ENCODE measurements at regions of chr11 and their contacts with region 1.

Region 1: DNA sequence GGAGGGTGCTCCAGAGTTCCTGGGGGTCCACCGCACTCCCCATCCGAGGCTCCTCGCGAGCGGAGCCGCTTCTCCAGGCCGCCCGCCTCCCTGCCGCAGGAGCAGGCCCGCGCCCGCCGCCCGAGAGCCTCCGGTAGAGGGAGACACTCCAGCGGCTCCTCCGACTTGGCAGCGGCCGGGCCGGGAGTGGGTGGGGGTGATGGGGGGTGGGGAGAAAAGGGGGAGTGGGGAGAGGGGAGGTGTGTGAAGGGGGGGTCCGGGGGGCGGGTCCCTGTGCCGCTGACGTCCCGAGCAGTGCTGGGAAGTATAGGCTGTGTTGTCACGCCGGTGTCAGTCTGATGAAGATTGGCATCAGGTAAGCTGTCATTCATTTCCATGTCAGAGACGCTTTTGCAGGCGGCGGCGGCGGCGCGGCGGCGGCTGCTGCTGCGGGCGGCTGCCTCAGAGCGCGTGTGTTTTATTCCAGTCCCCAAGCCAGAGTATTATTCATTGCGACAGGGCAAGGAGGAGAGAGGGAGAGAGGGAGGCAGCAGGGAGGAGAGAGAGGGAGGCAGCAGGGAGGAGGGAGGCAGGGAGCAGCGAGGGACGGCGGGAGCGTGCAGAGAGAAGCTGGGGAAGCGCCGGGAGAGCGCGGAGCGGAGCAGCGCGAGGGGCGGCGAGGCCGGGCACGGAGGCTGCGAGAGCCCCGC is at the start of gene PKNOX2:
- DNase-seq: peak; percentile 70 to 84
- H3K4me3 ChIP-seq: peak within 1 kb of the TSS; percentile 59 to 65
- H3K27ac ChIP-seq: peak within 1 kb of the TSS; percentile 72 to 88
- H3K4me1 ChIP-seq: peaks cover 0 to 43% (median 30%) of the 10 kb centered on the region in 4 donors
- H3K27me3 ChIP-seq: no peaks in the 10 kb centered on the region
- CTCF ChIP-seq: peak in 1 of 2 experiments; percentile 68

Region 2: GRCh38 chr11:125224391-125225010 is 59.9 kb after region 1 on chr11:
- intact Hi-C with region 1: loop called (anchors 5 kb)
- DNase-seq: peak in 1 of 2 donors; percentile 43
- H3K4me3 ChIP-seq: no peak overlapping the region
- H3K27ac ChIP-seq: no peak overlapping the region
- H3K4me1 ChIP-seq: no peaks in the 10 kb centered on the region
- H3K27me3 ChIP-seq: no peaks in the 10 kb centered on the region
- CTCF ChIP-seq: peak; percentile 30 to 31

Region 3: DNA sequence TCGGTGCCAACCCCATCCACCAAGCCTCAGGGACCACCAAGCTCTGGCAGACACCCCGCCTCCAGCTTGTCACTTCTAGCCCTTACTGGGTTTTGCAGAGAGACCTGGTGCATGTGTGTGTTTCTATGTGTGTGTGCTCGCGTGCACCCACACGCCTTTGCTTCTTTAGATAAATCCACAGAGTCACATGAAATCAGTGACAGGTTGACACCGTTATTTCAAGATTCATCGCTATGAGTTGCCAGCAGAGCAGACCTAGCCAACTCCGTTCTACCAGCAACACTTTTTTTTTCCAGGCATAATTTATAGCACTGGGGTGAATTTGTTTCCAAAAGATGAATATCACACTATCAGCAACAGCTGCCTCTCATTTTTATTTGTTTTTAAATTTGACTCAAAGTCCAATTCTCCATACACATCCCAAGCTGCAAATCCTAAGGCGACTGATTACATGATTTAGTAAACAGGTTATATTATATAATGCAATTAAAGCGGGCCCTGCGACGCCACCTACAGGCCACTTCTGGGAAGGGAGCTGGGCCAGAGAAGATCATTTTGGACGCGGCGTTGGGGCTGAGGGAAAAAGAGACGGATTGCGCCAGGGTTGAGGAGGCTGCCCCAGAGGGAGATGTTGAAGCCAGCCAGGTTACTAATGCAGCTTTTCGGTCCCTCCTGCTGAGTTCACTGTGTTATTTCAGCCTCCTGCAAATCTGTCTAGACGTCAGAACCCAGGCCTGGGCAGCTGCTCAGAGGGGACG is 181.0 kb after region 1 on chr11:
- intact Hi-C with region 1: loop called (anchors 2 kb)
- DNase-seq: peak; percentile 89 to 92
- H3K4me3 ChIP-seq: no peak overlapping the region
- H3K27ac ChIP-seq: peak overlapping the region; percentile 29 to 58
- H3K4me1 ChIP-seq: peaks cover 0 to 27% (median 13%) of the 10 kb centered on the region in 4 donors
- H3K27me3 ChIP-seq: no peaks in the 10 kb centered on the region
- CTCF ChIP-seq: peak; percentile 81 to 87

Region 4: DNA sequence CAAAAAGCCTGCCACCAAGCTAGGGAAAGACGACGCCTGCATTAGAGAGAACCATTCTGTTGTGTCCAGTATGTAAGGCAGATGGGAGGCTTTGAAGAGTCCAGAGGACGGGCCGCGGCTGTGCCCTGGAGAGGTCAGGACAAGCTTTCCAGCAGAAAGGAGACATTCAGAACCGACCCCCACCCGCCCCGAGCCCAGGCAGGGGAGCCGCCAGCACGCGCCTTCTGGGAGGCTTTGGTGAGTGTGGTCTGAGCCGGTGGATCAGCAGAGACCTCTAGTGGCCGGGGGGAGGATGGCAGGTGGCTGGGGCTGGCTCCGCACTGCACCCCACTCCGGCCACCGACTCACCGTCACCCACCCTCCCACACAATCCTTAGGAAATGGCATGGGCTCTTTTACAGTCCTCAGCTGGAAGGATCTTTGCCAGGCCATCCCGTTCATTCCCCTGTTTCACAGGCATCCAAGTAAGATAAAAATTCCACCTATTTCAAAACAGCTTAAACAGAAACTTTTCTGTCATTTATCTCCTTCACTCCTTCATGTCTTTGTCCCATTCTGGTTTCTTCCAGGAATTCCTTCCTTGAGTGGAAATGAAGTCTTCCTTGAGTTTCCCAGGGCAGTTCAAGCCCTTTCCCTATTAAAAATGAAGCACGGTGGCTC is 240.3 kb after region 1 on chr11:
- intact Hi-C with region 1: loop called (anchors 10 kb)
- DNase-seq: peak; percentile 63 to 83
- H3K4me3 ChIP-seq: no peak overlapping the region
- H3K27ac ChIP-seq: peak overlapping the region; percentile 15 to 28
- H3K4me1 ChIP-seq: peaks cover 0 to 13% (median 9%) of the 10 kb centered on the region in 4 donors
- H3K27me3 ChIP-seq: peaks cover 0 to 2% of the 10 kb centered on the region in 2 donors
- CTCF ChIP-seq: peak; percentile 94 to 99